ENCODE measurements at regions of chr2 and their contacts with region 1.

Region 1: DNA sequence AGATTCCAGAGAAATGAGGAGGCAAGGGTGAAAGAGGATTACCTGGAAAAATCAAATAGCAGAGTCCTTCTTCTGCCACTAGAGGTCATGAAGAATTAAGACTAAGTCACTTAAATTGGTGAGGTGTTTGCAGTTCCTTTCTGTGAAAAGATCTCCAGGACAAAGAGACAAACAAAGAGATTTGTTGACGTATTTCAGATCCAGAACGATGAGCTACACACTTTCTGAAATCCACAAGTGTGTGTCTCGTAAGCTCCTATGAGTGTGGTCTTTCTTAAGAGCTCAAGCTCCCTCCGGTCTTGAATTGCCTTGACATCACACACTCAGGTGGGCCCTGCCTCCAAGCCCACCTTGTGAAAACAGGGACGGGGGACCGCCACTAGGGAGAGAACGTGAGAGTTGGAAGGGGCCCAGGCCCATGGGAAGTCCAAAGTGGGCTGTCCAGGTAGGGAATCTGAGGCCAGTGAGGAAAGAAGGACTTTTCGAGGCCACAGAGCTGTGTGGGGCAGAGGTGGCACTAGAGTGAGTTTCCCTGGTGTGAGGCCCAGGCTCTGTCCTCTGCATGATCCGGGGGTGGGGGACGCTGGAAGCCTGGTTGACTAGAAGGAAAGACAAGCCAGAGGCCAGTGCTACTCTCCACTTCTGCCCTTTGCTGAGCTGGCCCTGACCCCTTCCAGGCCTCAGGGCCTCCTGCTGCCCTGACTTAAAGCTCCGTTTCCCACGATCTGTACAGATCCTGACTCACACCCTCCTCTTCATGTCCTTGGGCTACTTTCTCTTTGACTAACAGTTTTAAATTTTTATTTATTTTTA is 168.1 kb upstream of the NCK2 start:
- DNase-seq: peak; percentile 53
- ATAC-seq: no peak
- H3K4me3 ChIP-seq: no peak overlapping the region
- H3K4me3 Mint-ChIP-seq: no peak overlapping the region
- H3K27ac ChIP-seq: no peak overlapping the region
- H3K27ac Mint-ChIP-seq: peak overlapping the region; percentile 42
- H3K4me1 ChIP-seq: peaks cover 0 to 2% of the 10 kb centered on the region in 2 donors
- H3K4me1 Mint-ChIP-seq: peaks cover 5% of the 10 kb centered on the region
- H3K27me3 ChIP-seq: peaks cover 0 to 9% (median 0%) of the 10 kb centered on the region in 4 experiments
- H3K27me3 Mint-ChIP-seq: peaks cover 24% of the 10 kb centered on the region
- CTCF ChIP-seq: peak; percentile 72

Region 2: GRCh38 chr2:104923665-104924064 is 653.0 kb before region 1 on chr2:
- CTCF ChIA-PET with region 1: no interaction called
- POLR2A ChIA-PET with region 1: no interaction called
- intact Hi-C with region 1: no loop called
- DNase-seq: no peak
- ATAC-seq: no peak
- H3K4me3 ChIP-seq: no peak overlapping the region
- H3K4me3 Mint-ChIP-seq: no peak overlapping the region
- H3K27ac ChIP-seq: no peak overlapping the region
- H3K27ac Mint-ChIP-seq: no peak overlapping the region
- H3K4me1 ChIP-seq: no peaks in the 10 kb centered on the region
- H3K4me1 Mint-ChIP-seq: peaks cover 7% of the 10 kb centered on the region
- H3K27me3 ChIP-seq: no peaks in the 10 kb centered on the region
- H3K27me3 Mint-ChIP-seq: no peaks in the 10 kb centered on the region
- CTCF ChIP-seq: no peak

Region 3: DNA sequence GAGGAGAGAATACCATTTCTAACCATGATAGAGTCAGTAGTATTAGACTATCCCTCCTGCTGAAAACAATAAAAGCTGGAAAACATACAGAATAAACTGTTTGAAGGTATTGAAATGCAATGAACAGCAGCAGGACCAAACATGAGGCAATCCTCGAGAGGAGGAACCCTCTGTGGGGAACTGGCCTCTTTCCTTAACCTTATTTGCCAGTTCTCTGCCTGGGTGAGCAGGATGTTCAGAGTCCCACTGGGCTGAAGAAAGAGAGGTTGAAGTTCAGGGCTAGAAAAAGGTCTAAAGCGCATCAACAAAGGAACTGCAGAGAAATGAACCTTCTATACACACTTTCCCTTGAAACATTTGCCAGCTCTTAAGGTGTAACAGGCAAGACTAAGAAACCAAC is 98.0 kb before region 1 on chr2:
- CTCF ChIA-PET with region 1: no interaction called
- POLR2A ChIA-PET with region 1: no interaction called
- intact Hi-C with region 1: no loop called
- DNase-seq: no peak
- ATAC-seq: no peak
- H3K4me3 ChIP-seq: no peak overlapping the region
- H3K4me3 Mint-ChIP-seq: no peak overlapping the region
- H3K27ac ChIP-seq: no peak overlapping the region
- H3K27ac Mint-ChIP-seq: no peak overlapping the region
- H3K4me1 ChIP-seq: no peaks in the 10 kb centered on the region
- H3K4me1 Mint-ChIP-seq: no peaks in the 10 kb centered on the region
- H3K27me3 ChIP-seq: no peaks in the 10 kb centered on the region
- H3K27me3 Mint-ChIP-seq: peaks cover 9% of the 10 kb centered on the region
- CTCF ChIP-seq: no peak

Region 4: DNA sequence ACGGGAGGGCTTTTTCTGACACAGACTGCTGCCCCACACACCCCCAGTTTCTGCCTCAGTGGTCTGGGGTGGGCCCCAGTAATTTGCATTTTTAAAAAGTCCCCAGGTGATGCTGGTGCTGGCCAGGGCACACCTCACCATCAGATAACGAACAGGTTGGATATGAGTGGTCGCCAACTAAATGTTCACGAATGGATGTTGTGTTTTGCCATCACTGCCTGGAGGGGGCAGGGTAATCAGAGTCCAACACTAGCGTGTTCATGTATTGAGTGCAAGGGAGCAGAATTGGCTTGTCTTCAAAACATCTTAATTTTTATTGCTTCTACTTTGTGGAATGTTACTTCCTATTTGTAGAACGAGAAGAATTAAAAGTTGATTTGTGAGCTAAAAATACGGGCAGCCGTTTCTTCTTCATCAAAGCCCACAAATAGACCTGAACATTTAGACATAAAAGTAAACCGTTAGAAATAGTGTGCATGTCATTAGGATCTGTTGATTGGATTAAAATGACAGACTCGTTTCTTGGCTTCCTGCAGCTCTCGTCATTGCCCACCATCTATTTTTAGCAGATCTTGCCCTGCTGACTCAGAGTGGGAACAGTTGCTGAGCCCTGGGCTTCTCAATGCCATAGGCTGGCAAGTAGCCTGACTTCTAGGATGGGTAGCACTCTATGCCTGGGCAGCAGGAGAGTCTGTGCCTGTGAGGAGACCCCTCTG is 213.3 kb after region 1 on chr2:
- CTCF ChIA-PET with region 1: interaction called, 3 read pairs
- POLR2A ChIA-PET with region 1: no interaction called
- intact Hi-C with region 1: loop called (anchors 5 kb)
- DNase-seq: peak; percentile 55
- ATAC-seq: peak; percentile 65
- H3K4me3 ChIP-seq: peak overlapping the region in 2 of 5 experiments; percentile 18 to 26
- H3K4me3 Mint-ChIP-seq: peak overlapping the region; percentile 77
- H3K27ac ChIP-seq: peak overlapping the region; percentile 64 to 78
- H3K27ac Mint-ChIP-seq: peak overlapping the region; percentile 91
- H3K4me1 ChIP-seq: peaks cover 76 to 86% of the 10 kb centered on the region in 2 donors
- H3K4me1 Mint-ChIP-seq: peaks cover 83% of the 10 kb centered on the region
- H3K27me3 ChIP-seq: no peaks in the 10 kb centered on the region
- H3K27me3 Mint-ChIP-seq: no peaks in the 10 kb centered on the region
- CTCF ChIP-seq: peak; percentile 41

Region 5: DNA sequence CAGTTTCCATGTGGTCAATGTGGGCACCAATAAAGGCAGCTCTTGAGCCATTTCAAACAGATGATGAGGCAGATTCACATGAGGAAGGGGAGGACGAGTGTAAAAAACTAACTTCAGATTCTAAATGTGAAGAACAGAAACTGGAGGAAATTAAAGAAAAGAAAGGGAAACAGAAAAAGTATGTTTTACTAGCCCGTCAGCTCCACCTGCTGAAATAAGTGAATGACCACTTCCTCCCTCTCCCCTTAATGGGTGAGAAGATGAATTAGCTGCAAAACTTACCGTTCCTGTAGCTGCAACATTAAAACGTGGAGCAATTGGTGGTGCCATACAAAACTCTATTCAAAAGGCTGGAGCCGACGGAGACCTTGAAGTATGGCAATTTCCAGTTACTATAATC is 414.0 kb after region 1 on chr2:
- CTCF ChIA-PET with region 1: interaction called, 4 read pairs
- POLR2A ChIA-PET with region 1: no interaction called
- intact Hi-C with region 1: loop called (anchors 2 kb)
- DNase-seq: peak; percentile 27
- ATAC-seq: no peak
- H3K4me3 ChIP-seq: no peak overlapping the region
- H3K4me3 Mint-ChIP-seq: no peak overlapping the region
- H3K27ac ChIP-seq: no peak overlapping the region
- H3K27ac Mint-ChIP-seq: no peak overlapping the region
- H3K4me1 ChIP-seq: no peaks in the 10 kb centered on the region
- H3K4me1 Mint-ChIP-seq: no peaks in the 10 kb centered on the region
- H3K27me3 ChIP-seq: peaks cover 0 to 2% (median 0%) of the 10 kb centered on the region in 4 experiments
- H3K27me3 Mint-ChIP-seq: no peaks in the 10 kb centered on the region
- CTCF ChIP-seq: no peak

Region 6: DNA sequence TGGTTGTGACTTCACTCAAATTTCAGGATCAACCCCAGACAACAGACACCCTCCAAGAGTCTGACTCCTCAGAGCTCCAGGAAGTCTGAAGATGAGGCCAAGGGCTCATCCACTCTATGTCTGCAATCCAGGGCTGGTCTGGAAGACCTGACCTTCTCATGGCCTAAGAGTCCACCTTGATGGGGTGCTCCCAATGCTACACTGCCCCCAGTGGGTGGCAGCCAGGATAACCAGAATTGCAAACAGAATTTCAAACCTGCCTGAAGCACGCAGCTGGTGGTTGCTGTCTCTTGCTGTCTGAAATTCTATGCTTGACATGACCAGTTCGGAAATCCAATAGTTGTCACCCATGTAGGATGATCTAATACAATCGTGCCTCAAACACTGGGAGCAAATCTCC is 521.4 kb after region 1 on chr2:
- CTCF ChIA-PET with region 1: interaction called, 15 read pairs
- POLR2A ChIA-PET with region 1: no interaction called
- intact Hi-C with region 1: loop called (anchors 5 kb)
- DNase-seq: no peak
- ATAC-seq: no peak
- H3K4me3 ChIP-seq: no peak overlapping the region
- H3K4me3 Mint-ChIP-seq: no peak overlapping the region
- H3K27ac ChIP-seq: no peak overlapping the region
- H3K27ac Mint-ChIP-seq: no peak overlapping the region
- H3K4me1 ChIP-seq: peaks cover 30 to 32% of the 10 kb centered on the region in 2 donors
- H3K4me1 Mint-ChIP-seq: peaks cover 25% of the 10 kb centered on the region
- H3K27me3 ChIP-seq: no peaks in the 10 kb centered on the region
- H3K27me3 Mint-ChIP-seq: no peaks in the 10 kb centered on the region
- CTCF ChIP-seq: no peak

Measured in B cell (primary cell).